ENCODE measurements at regions of chr11 and their contacts with region 1.

Region 1: GRCh38 chr11:84714316-84714780 is 912.8 kb downstream of the DLG2 start:
- DNase-seq: peak; percentile 13 to 40 (median 37)
- ATAC-seq: peak; percentile 58 to 82 (median 76)
- H3K4me3 ChIP-seq: no peak overlapping the region
- H3K27ac ChIP-seq: no peak overlapping the region
- H3K4me1 ChIP-seq: no peaks in the 10 kb centered on the region
- H3K27me3 ChIP-seq: no peaks in the 10 kb centered on the region
- CTCF ChIP-seq: peak in 11 of 12 donors; percentile 16 to 58 (median 37)
- POLR2A ChIP-seq: no peak

Region 2: DNA sequence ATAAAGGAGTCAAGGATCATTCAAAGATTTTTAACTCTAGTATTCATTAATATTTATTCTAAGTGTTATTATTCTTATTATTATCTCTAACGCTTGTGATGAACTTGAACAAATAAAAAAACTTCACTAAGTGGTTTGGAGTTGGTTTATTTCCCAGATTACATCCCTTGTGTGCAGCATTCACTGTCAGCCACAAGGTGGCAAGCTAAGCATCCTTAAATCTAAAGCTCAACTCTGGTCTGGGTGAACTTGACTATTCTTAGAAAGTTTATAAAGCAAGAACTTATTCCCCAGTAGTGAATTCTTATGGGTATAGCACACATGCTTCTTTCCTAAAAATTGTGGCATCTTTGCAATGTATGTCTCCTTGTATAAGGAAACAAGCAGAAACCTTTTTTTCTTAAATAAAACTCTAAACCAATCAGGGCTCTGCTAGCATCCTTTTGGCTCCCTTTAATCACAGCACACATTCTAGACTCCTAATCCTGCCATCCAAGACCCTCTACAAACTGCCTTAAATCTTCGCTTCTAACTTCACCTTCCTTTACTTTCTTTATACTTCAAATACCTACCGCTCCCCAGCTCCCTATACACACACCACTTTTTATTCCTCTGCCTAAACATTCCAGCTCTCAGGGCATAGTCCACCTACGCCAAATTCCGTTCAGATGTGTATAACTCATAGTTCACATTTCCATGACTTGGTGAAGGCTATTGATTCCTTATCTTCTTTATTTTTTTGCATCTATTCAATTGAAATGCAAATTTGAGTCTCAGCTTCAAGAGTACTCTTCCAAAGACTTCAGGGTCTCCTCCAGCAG is 156.1 kb before region 1 on chr11:
- intact Hi-C with region 1: loop called in 7 of 10 experiments (anchors 2 to 10 kb)
- DNase-seq: peak in 1 of 5 donors; percentile 12
- ATAC-seq: peak in 3 of 4 donors; percentile 24 to 58 (median 55)
- H3K4me3 ChIP-seq: no peak overlapping the region
- H3K27ac ChIP-seq: no peak overlapping the region
- H3K4me1 ChIP-seq: no peaks in the 10 kb centered on the region
- H3K27me3 ChIP-seq: no peaks in the 10 kb centered on the region
- CTCF ChIP-seq: peak; percentile 57 to 85 (median 72)
- POLR2A ChIP-seq: no peak

Region 3: DNA sequence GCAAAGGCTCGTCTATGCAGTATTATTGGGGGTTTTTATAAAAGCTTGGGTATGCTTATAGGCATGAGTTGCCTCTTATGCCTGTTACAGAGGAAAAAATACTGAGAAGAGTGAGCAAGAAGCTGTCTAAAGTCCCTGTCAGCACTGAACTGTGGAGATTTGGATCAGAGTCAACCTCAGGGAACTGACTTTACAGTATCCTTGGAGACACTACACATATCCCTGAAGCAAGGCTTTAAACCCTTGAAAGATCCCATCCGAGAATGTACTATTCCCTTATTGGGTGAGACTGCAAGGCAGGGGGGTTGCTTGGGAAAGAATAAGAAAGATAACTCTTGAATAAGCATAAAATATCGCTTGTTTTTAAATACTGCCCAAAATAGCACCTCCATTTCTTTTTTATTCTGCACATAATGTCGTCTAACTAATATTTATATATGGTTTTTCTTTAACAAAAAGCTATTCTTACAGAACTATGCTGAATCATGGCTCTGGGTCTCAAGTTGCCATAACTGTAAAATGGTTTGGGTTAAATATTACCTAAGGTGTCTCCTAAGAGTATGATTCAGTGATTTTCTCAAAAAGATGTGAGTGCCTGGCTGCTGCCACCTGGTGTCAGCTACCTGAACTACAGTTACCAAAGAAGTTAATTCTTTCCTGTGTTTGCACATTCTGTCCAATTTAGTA is 150.0 kb before region 1 on chr11:
- intact Hi-C with region 1: loop called in 7 of 10 experiments (anchors 2 to 10 kb)
- DNase-seq: no peak
- ATAC-seq: no peak
- H3K4me3 ChIP-seq: no peak overlapping the region
- H3K27ac ChIP-seq: no peak overlapping the region
- H3K4me1 ChIP-seq: no peaks in the 10 kb centered on the region
- H3K27me3 ChIP-seq: no peaks in the 10 kb centered on the region
- CTCF ChIP-seq: peak; percentile 51 to 89 (median 78)
- POLR2A ChIP-seq: no peak

Region 4: GRCh38 chr11:84780689-84781293 is 66.4 kb after region 1 on chr11:
- intact Hi-C with region 1: no loop called
- DNase-seq: no peak
- ATAC-seq: no peak
- H3K4me3 ChIP-seq: no peak overlapping the region
- H3K27ac ChIP-seq: no peak overlapping the region
- H3K4me1 ChIP-seq: no peaks in the 10 kb centered on the region
- H3K27me3 ChIP-seq: no peaks in the 10 kb centered on the region
- CTCF ChIP-seq: peak in 11 of 12 donors; percentile 11 to 57 (median 43)
- POLR2A ChIP-seq: no peak